ENCODE measurements at regions of chr4 and their contacts with region 1.

Region 1: GRCh38 chr4:40149960-40150385 is 46.9 kb upstream of the RHOH start:
- DNase-seq: peak; percentile 19
- H3K4me3 ChIP-seq: no peak overlapping the region
- H3K27ac ChIP-seq: no peak overlapping the region
- H3K4me1 ChIP-seq: no peaks in the 10 kb centered on the region
- H3K27me3 ChIP-seq: no peaks in the 10 kb centered on the region
- CTCF ChIP-seq: peak; percentile 87

Region 2: GRCh38 chr4:39754309-39754708 is 395.7 kb before region 1 on chr4:
- intact Hi-C with region 1: no loop called
- DNase-seq: no peak
- H3K4me3 ChIP-seq: no peak overlapping the region
- H3K27ac ChIP-seq: no peak overlapping the region
- H3K4me1 ChIP-seq: no peaks in the 10 kb centered on the region
- H3K27me3 ChIP-seq: no peaks in the 10 kb centered on the region
- CTCF ChIP-seq: no peak

Region 3: DNA sequence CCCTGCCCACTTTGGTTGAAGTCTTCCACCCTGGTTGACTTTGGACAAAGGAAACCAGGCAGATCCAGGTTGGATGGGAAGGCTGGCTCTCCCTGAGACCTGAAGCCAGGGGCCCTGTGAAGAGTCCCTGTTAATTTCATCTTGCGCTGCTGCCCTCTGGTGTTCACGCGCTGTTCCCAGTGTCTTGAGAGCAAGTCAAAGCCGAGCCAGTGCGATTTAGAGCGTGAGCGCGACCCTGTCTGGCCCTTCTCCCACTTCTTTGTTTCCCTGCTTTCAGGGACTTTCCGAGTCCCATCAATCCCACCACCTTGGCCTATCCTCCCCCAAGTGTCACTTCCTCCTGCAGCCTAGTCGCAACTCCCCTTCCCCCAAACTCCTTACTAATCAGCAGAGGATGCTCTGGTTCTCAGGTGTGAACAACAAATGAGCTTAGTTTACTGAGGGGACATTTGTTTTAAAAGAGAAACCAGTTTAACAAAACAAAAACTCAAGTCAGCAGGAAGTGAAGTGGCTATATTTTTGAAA is 159.3 kb after region 1 on chr4:
- intact Hi-C with region 1: loop called (anchors 5 kb)
- DNase-seq: peak; percentile 84
- H3K4me3 ChIP-seq: no peak overlapping the region
- H3K27ac ChIP-seq: no peak overlapping the region
- H3K4me1 ChIP-seq: peaks cover 4% of the 10 kb centered on the region
- H3K27me3 ChIP-seq: peaks cover 18% of the 10 kb centered on the region
- CTCF ChIP-seq: peak; percentile 90